Sciatic nerve (tissue), 2 donors: ENCODE measurements at regions of chr12 and their contacts with region 1.

Region 1: DNA sequence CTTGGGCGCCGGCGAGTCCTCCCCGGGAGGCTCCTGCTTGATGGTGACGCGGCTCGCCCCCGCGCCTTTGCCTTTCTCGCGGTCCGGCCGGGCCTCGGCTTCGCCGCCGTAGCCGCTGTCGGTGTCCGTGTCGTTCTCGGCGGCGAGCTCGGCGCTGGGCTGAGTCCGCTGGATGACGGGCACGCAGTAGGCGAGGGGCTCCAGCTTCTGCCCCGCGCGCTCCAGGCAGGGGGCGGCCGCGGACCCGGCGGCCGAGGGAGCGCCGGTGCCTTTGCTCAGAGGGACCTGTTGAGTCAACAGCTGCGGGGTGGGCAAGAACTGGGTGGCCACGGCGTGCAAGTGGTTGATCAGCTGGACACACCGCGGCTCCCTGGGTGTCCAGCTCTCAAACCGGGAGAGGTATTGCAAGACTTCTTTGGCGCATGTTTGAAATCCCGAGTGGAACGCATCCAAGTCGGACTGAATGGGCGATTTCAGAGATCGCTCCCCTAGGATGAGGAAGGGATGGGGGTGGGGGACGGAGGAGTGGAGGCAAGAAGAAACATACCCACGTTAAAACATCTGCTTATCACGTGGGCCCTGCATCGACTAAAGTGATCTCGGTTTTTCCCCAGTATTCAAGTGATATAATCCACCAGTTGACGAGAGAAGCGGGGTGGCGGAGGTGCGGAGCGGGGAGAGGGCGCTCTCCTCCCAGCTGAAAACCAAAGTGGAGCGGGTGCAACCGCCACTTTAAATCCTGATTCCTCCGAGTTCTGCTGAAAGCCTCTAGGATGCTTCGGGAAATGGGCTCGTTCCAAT is 2.0 kb downstream of the BHLHE41 start:
- DNase-seq: peak; percentile 90
- ATAC-seq: peak; percentile 64

Region 2: GRCh38 chr12:25970916-25971653 is 151.8 kb before region 1 on chr12:
- intact Hi-C with region 1: no loop called
- DNase-seq: no peak
- ATAC-seq: peak; percentile 78

Region 3: DNA sequence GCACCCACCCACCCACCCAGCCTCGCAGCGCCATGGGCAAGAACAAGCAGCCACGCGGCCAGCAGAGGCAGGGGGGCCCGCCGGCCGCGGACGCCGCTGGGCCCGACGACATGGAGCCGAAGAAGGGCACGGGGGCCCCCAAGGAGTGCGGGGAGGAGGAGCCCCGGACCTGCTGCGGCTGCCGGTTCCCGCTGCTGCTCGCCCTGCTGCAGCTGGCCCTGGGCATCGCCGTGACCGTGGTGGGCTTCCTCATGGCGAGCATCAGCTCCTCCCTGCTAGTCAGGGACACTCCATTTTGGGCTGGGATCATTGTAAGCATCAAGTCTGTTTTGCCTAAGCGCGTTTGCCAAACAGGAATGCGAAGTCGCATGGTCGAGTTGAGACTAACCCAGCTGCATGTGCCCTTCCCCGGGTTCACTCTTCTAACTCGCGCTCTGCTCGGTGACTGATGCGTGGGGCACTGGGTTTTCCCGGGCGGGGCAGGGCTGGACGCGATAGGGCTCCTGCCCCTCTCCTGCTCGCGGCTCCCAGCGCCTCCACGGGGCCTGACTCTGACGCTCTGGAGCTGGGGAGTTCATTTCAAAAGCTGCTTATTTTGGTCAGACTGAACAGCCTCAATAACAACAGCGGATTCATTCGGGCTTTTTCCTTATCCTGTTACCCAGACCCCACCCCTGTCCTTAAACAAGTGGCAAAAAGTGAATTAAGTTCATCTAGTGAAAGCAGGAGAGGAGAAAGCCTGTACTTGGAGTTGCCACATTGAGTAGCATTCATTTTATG is 73.0 kb after region 1 on chr12:
- intact Hi-C with region 1: loop called (anchors 5 kb)
- DNase-seq: peak; percentile 78
- ATAC-seq: peak; percentile 90